H1 (cell line): ENCODE measurements at regions of chr5 and their contacts with region 1.

Region 1: GRCh38 chr5:862367-863243 is 11.8 kb upstream of the ZDHHC11 start:
- DNase-seq: no peak
- H3K4me3 ChIP-seq: no peak overlapping the region
- H3K27ac ChIP-seq: no peak overlapping the region
- H3K4me1 ChIP-seq: no peaks in the 10 kb centered on the region; a peak in 1 of 7 replicates
- H3K27me3 ChIP-seq: no peaks in the 10 kb centered on the region
- CTCF ChIP-seq: no peak
- EP300 ChIP-seq: no peak
- POLR2A ChIP-seq: peak in 1 of 2 experiments; percentile 40; a peak in 1 of 3 replicates
- RAD21 ChIP-seq: no peak

Region 2: DNA sequence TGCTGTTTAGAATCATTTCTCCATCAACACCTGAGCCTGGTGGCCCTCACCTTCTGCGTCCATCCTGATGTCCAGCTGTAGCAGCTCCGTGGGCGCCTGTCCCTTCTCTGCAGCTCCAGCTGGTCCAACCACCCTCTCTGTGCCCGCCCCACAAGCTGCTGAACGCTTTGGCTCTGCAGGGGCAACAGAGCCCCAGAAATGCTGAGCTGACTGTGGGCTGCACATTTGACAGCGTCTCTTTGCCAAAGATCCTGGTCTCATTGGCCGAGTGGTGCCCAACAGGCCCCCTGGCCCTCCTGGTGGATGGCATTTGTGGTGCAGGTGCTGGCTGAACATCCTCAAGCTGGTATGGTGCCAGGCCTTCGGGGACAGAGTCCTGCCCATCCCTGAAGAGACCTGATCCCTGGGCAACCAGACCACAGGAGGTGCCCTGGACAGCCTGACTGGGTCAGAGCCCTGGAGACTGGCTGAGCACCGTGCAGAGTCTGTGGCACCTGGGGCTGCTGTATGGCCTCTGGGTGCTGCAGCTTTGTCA is 275.8 kb before region 1 on chr5:
- CTCF ChIA-PET with region 1: no interaction called
- POLR2A ChIA-PET with region 1: no interaction called
- DNase-seq: no peak
- H3K4me3 ChIP-seq: no peak overlapping the region
- H3K27ac ChIP-seq: no peak overlapping the region
- H3K4me1 ChIP-seq: peaks cover 0 to 5% (median 0%) of the 10 kb centered on the region in 4 experiments; a peak in 1 of 7 replicates
- H3K27me3 ChIP-seq: no peaks in the 10 kb centered on the region; a peak in 1 of 7 replicates
- CTCF ChIP-seq: peak in 2 of 3 experiments; percentile 35 to 47; a peak in 2 of 4 replicates
- EP300 ChIP-seq: no peak
- POLR2A ChIP-seq: no peak
- RAD21 ChIP-seq: 0 out of 4 replicates have a peak, but pooled peaks of 1 of the 2 experiments have one; percentile 12

Region 3: DNA sequence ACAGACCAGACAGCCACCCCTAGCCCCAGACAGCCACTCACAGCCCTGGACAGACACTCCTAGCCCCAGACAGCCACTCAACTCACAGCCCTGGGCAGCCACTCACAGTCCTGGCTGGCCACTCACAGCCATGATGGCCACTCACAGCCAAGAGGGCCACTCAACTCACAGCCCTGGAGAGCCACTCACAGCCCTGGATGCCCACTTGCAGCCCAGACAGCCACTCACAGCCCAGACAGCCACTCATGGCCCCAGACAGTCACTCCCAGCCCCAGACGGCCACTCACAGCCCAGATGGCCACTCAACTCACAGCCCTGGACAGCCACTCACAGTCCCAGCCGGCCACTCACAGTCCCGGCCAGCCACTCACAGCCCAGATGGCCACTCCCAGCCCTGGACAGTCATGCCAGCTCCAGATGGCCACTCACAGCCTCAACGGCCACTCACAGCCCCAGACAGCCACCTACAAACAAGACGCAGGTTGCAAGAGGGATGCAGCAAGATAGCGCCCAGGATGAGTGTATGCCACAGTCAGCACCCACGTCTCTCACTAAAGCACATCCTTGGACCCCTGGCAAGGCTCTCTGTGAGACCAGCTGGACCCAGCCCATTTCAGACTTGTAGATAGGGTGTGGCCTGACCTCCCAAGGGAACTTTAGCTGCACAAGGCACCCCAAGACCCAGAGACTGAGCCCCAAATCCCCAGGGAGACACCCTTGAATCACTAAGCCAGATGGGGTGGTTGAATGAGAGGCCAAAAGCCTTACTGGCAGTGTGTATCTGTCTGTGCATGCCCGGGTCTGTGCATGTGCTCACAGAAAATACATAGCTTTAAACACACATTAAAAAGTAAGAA is 100.5 kb before region 1 on chr5:
- CTCF ChIA-PET with region 1: no interaction called
- POLR2A ChIA-PET with region 1: no interaction called
- DNase-seq: no peak
- H3K4me3 ChIP-seq: no peak overlapping the region
- H3K27ac ChIP-seq: no peak overlapping the region
- H3K4me1 ChIP-seq: no peaks in the 10 kb centered on the region; a peak in 1 of 7 replicates
- H3K27me3 ChIP-seq: no peaks in the 10 kb centered on the region; a peak in 1 of 7 replicates
- CTCF ChIP-seq: no peak
- EP300 ChIP-seq: no peak
- POLR2A ChIP-seq: no peak
- RAD21 ChIP-seq: no peak

Region 4: GRCh38 chr5:849651-850301 is 12.8 kb before region 1 on chr5:
- CTCF ChIA-PET with region 1: no interaction called
- POLR2A ChIA-PET with region 1: interaction called, 20 read pairs
- DNase-seq: no peak
- H3K4me3 ChIP-seq: no peak overlapping the region
- H3K27ac ChIP-seq: no peak overlapping the region
- H3K4me1 ChIP-seq: peaks cover 0 to 3% (median 0%) of the 10 kb centered on the region in 4 experiments; a peak in 1 of 7 replicates
- H3K27me3 ChIP-seq: 0 out of 7 replicates have a peak, but pooled peaks cover 0 to 2% (median 0%) of the 10 kb centered on the region in 4 experiments
- CTCF ChIP-seq: no peak
- EP300 ChIP-seq: no peak
- POLR2A ChIP-seq: no peak
- RAD21 ChIP-seq: no peak

Region 5: GRCh38 chr5:885529-885928 is 22.9 kb after region 1 on chr5:
- CTCF ChIA-PET with region 1: no interaction called
- POLR2A ChIA-PET with region 1: interaction called, 46 read pairs
- DNase-seq: no peak
- H3K4me3 ChIP-seq: no peak overlapping the region
- H3K27ac ChIP-seq: no peak overlapping the region
- H3K4me1 ChIP-seq: no peaks in the 10 kb centered on the region
- H3K27me3 ChIP-seq: no peaks in the 10 kb centered on the region; a peak in 1 of 7 replicates
- CTCF ChIP-seq: no peak
- EP300 ChIP-seq: no peak
- POLR2A ChIP-seq: no peak
- RAD21 ChIP-seq: no peak

Region 6: DNA sequence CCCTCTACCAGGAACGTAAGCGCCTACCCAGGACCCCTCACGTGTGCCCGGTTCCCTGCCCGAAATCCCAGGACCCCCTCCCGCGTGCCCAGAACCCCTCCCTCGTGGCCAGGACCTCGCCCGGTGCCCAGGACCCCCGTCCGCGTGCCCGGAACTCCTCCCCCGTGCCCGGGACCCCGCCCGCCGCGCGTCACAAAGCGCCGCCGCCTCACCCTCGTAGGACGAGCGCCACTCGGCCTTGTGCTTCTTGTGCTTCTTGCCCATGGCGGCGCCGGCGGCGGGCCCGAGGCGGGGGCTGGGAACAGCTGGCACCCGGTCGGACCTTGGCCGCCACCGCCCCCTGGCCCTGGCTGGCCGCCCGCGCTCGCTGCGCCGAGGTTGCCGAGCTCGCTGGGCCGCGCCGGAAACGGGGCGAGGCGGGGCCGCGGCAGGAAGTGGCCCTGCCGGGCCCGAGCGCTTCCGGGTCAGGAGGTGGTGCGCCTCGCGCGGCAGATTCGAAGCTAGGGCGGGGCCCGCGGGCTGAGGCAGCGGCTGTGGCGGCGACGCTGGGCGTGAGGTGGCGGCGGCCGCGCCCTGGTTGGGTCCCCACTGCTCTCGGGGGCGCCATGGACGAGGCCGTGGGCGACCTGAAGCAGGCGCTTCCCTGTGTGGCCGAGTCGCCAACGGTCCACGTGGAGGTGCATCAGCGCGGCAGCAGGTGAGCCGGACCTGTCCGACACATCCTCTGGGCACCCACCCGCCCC is 30.0 kb after region 1 on chr5 and contains the starts of genes BRD9 and TRIP13:
- CTCF ChIA-PET with region 1: no interaction called
- POLR2A ChIA-PET with region 1: interaction called, 46 read pairs
- DNase-seq: peak in 1 of 2 experiments; percentile 88
- H3K4me3 ChIP-seq: peak within 1 kb of the TSS; percentile 86 to 95 (median 90)
- H3K27ac ChIP-seq: peak within 1 kb of the TSS; percentile 92
- H3K4me1 ChIP-seq: peaks cover 0 to 13% (median 7%) of the 10 kb centered on the region in 4 experiments; a peak in 6 of 7 replicates
- H3K27me3 ChIP-seq: no peaks in the 10 kb centered on the region
- CTCF ChIP-seq: no peak
- EP300 ChIP-seq: peak in 1 of 2 experiments; percentile 9; a peak in 1 of 3 replicates
- POLR2A ChIP-seq: peak in 1 of 2 experiments; percentile 72; a peak in 2 of 3 replicates
- RAD21 ChIP-seq: 0 out of 4 replicates have a peak, but pooled peaks of 1 of the 2 experiments have one; percentile 6
- total RNA-seq, gene BRD9: 46.5 and 49.4 TPM in 2 replicates
- total RNA-seq, gene TRIP13: 34.5 and 39.2 TPM in 2 replicates

Region 7: GRCh38 chr5:902129-902916 is 39.7 kb after region 1 on chr5:
- CTCF ChIA-PET with region 1: interaction called, 12 read pairs
- POLR2A ChIA-PET with region 1: interaction called, 5 read pairs
- DNase-seq: no peak
- H3K4me3 ChIP-seq: no peak overlapping the region
- H3K27ac ChIP-seq: no peak overlapping the region
- H3K4me1 ChIP-seq: no peaks in the 10 kb centered on the region
- H3K27me3 ChIP-seq: no peaks in the 10 kb centered on the region
- CTCF ChIP-seq: no peak
- EP300 ChIP-seq: no peak
- POLR2A ChIP-seq: no peak
- RAD21 ChIP-seq: no peak

Region 8: DNA sequence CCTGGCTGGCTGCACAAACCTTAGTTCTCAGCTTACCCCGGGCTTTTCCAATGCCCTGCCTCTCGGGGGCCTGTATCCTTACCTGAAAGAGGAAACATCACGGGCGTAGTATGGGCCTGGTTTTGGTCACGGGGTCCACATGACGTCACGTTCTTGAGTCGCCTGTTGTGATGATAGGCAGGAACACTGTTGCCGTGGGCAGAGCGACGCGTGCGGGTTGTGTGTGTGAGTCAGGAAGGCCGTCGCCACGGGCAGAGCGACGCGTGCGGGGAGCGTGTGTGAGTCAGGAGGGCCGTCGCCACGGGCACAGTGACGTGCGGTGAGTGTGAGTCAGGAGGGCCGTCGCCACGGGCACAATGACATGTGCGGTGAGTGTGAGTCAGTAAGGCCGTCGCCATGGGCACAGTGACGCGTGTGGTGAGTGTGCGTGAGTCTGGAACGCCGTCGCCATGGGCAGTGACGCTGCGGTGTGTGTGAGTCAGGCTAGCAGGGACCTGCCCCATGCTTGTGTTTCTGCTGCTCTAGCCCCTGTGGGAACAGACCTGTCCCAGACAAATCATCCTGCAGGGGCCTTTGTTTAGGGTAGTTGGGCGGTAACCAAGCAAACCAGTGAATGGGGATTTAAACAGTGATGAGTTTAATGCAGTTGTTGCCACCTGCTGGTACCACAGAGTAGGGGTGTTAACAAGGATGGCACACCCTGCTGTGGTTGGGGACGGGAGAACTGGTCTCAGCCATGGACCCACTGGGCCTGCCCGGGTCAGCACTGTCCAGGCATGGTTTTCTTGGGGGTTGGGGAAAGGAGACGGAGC is 49.9 kb after region 1 on chr5:
- CTCF ChIA-PET with region 1: no interaction called
- POLR2A ChIA-PET with region 1: no interaction called
- DNase-seq: no peak
- H3K4me3 ChIP-seq: no peak overlapping the region
- H3K27ac ChIP-seq: peak overlapping the region; percentile 63
- H3K4me1 ChIP-seq: no peaks in the 10 kb centered on the region
- H3K27me3 ChIP-seq: no peaks in the 10 kb centered on the region
- CTCF ChIP-seq: no peak; a peak in 1 of 4 replicates
- EP300 ChIP-seq: no peak
- POLR2A ChIP-seq: no peak
- RAD21 ChIP-seq: no peak